ENCODE measurements at regions of chr2 and their contacts with region 1.

Region 1: DNA sequence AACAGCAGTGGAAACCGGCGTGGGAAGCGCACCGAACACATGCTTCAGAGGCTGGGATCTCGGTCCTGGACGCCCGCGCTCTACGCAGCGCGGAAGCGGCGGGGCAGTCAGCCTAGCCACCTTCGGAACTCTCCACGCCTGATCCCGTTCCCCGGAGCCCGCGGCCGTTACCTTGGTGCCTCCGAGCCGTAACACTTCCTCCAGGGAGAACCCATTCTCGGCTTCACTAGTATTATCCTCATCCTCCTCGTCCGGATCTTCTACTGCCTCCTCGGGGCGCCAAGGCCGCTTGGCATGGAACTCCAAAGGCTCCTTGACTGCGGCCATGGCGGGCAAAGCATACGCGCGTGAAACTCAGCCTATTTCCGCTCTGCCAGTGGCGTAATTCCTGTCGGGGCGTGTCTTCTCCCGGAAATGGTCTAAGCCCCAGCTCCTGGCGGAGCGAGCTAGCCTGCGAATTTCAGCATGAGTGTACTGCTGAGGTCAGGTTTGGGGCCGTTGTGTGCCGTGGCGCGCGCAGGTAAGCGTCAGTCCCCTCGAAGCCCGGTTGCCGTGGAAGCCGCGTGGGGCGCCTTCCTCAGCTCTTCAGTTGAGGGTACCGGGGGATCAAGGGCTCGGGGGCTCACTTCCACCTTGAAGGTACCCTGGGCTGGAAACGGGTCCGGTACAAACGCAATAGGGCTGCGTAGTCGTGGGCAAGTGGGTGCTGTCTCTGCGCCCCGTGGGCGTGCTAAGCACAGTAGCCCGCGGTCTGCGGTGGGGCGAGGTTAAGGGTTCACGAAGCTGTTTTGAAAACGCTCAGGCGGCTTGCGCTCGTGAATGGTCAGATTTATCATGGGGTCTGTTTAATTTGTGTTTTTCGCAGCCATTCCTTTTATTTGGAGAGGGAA is at the starts of genes CEBPZ and NDUFAF7:
- DNase-seq: peak; percentile 91
- H3K4me3 ChIP-seq: peak within 1 kb of the TSS; percentile 92
- H3K27ac ChIP-seq: peak within 1 kb of the TSS; percentile 48
- H3K4me1 ChIP-seq: peaks cover 42% of the 10 kb centered on the region
- CTCF ChIP-seq: 0 out of 2 replicates have a peak, but pooled peaks have one; percentile 18
- total RNA-seq, gene CEBPZ: 34.9 and 50.2 TPM in 2 replicates
- total RNA-seq, gene NDUFAF7: 17.3 and 23.3 TPM in 2 replicates

Region 2: DNA sequence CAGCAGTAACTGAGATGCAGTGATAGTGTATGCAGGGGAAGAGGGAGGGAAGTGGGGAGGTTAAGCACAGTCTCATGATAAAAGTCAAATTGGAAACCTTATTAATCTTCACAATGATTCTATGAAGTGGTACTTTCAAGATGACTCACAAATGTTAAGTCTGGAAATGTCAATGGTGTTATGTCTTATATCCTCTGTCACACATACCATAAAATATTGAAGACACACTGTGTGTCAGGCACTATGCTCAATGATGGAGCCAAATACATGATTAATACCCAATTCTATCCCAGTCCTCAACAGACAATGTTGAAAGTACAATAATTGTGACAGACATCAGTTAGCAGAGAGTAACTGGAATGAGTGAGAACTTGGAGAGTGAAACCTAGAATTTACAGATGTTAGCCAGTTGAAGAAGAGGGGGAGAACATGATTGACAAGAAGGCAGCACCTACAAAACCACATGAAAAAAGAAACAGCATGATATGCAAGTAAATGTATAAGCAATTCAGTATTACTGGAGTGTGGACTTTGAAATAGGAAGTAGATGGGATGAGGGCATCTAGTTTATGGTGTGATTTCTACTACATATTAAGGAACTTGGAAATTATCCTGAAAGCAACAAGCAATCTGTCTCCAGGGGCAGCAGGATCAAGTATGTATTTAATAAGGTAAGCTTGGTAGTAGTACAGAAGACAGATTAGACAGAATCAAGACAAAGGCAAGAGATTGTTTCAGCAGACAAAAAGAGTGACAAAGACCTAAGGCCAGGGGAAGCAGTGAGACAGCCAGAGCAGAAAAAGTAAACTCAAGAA is 372.7 kb before region 1 on chr2:
- CTCF ChIA-PET with region 1: no interaction called
- POLR2A ChIA-PET with region 1: no interaction called
- intact Hi-C with region 1: no loop called
- DNase-seq: no peak
- H3K4me3 ChIP-seq: no peak overlapping the region
- H3K27ac ChIP-seq: no peak overlapping the region
- H3K4me1 ChIP-seq: no peaks in the 10 kb centered on the region
- CTCF ChIP-seq: no peak

Region 3: GRCh38 chr2:37196320-37197195 is 34.9 kb before region 1 on chr2 and contains the start of gene CEBPZOS:
- CTCF ChIA-PET with region 1: no interaction called
- POLR2A ChIA-PET with region 1: interaction called, 3 read pairs
- intact Hi-C with region 1: loop called (anchors 2 kb)
- DNase-seq: peak; percentile 88
- H3K4me3 ChIP-seq: peak within 1 kb of the TSS; percentile 79
- H3K27ac ChIP-seq: peak within 1 kb of the TSS; percentile 56
- H3K4me1 ChIP-seq: peaks cover 23% of the 10 kb centered on the region
- CTCF ChIP-seq: peak; percentile 33; the same call in 1 of the 2 replicates
- total RNA-seq, gene CEBPZOS: 19.2 and 31.1 TPM in 2 replicates

Measured in OCI-LY7 (cell line).